Ovary (tissue), 10 donors: ENCODE measurements at regions of chr5 and their contacts with region 1.

Region 1: GRCh38 chr5:58498340-58498942 is 7.2 kb downstream of the GAPT start:
- DNase-seq: peak in 3 of 5 donors; percentile 25 to 68 (median 37)
- H3K4me3 ChIP-seq: no peak overlapping the region
- H3K27ac ChIP-seq: no peak overlapping the region
- H3K4me1 ChIP-seq: no peaks in the 10 kb centered on the region
- H3K27me3 ChIP-seq: no peaks in the 10 kb centered on the region
- CTCF ChIP-seq: peak in 2 of 3 donors; percentile 53 to 65
- EP300 ChIP-seq: no peak
- POLR2A ChIP-seq: no peak

Region 2: DNA sequence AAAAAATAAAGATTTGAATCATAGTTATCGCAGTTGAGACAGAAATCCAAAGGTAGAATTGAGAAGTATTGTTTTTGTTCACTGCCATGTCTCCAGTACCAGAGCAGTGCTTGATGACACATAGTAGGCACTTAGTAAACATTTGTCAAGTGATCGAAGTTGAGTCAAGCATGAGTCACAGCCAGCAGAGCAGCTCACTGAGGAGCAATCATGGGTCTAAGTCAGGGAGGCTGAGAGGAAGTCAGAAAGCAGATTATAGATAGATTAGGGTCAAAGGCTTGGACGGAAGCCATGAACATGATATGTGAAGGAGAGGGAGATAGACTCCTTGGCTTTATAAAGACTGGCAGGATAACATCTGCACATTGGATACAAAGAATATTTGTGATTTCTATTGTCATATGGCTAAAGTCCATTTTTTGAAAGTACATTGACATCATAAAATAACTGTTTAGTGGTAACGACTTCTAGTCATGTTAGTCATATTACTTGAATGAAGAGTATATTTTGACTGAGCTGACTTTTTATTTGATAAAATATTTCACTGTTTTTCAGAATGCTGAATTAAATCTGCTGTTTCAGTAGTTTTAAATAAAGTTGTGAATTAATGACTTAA is 252.9 kb after region 1 on chr5:
- intact Hi-C with region 1: no loop called
- DNase-seq: no peak
- H3K4me3 ChIP-seq: no peak overlapping the region
- H3K27ac ChIP-seq: no peak overlapping the region
- H3K4me1 ChIP-seq: no peaks in the 10 kb centered on the region
- H3K27me3 ChIP-seq: no peaks in the 10 kb centered on the region
- CTCF ChIP-seq: no peak
- EP300 ChIP-seq: no peak
- POLR2A ChIP-seq: no peak

Region 3: GRCh38 chr5:58849921-58850667 is 351.7 kb after region 1 on chr5:
- intact Hi-C with region 1: loop called (anchors 5 to 10 kb)
- DNase-seq: no peak
- H3K4me3 ChIP-seq: no peak overlapping the region
- H3K27ac ChIP-seq: no peak overlapping the region
- H3K4me1 ChIP-seq: no peaks in the 10 kb centered on the region
- H3K27me3 ChIP-seq: no peaks in the 10 kb centered on the region
- CTCF ChIP-seq: peak in 2 of 3 donors; percentile 43 to 54
- EP300 ChIP-seq: no peak
- POLR2A ChIP-seq: no peak